GM18951 (cell line): ENCODE measurements at regions of chr17 and their contacts with region 1.

Region 1: DNA sequence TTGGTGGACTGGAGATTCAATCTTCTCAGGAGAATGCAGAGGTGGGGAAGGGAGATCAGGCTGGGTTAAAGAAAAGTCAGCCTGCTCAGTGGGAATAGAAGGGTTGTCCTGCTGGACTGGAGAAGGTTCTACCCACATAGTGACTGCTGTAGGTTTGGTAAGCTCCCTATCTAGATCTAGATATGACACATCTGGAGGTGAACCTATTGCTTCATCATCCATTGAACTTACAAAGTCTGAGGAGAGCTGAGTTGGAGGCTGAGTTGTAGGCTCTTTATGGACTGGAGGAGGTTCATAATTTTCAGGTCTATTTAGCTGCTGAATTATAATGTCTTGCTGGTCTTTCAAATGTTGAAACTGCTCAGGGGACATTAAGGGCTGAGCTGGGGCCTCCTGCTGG is 46.0 kb upstream of the NF1 start:
- POLR2A ChIP-seq: no peak

Region 2: GRCh38 chr17:31369266-31369665 is 320.5 kb after region 1 on chr17:
- in situ Hi-C with region 1: no loop called
- POLR2A ChIP-seq: no peak

Region 3: DNA sequence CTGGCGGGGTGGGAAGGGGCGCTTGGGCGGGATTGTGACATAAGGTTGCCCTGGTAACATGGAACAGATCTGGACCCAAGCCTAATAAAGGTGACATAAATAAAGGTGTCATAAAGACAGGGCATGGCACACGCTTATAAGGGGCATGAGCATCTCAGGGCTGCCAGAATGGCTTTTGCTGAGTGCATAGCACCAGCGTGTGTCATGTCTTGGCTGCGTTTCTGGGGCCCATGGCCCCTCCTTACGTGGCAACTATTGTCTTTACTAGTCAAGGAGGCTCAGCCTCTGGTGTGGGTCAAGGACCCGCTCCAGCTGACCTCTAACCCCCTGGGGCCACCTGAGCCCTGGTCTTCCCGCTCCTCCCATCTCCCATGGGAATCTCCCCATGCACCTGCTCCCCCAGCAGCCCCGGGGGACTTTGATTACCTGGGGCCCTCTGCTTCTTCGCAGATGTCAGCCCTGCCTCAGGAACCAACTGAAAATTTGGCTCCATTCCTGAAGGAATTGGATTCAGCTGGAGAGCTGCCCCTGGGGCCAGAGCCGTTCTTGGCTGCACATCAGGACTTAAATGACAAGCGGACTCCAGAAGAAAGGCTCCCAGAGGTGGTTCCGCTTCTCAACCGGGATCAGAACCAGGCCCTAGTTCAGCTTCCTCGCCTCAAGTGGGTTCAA is 972.3 kb after region 1 on chr17:
- in situ Hi-C with region 1: loop called (anchors 10 kb)
- POLR2A ChIP-seq: no peak